Activated CD8-positive, alpha-beta T cell treated with anti-CD3 and anti-CD28 coated beads, Interleukin-2, amount 10 ng/mL, durations not matched to agents 7 days and 5 days (primary cell): ENCODE measurements at regions of chr12 and their contacts with region 1.

Region 1: DNA sequence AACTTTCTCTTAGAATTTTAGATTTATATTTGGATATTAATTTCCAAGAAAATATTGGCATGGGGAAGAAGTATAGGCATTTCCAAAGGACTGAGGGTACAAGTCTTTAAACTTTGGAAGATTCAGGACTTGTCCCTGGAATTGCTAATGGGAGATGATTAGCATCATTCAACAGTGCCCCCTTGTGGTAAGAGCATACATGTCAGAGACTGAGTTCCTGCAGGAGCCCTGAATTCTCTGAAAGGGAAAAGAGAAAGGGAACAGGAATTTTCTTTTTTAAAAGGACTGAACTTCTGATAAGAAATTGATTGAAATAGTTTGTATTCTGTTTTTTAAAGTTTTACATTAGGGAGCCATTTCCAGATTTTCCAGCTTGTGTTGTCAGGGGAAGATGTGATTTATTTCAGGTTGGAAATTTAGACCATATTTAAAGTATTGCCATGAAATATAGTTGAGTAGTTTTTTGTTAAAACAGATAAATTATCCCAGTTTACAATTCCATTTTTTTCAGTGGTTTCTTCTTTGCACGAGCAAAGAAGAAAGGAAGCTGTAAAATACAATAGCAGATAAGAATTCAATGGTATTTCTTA is 44.0 kb upstream of the REP15 start:
- DNase-seq: peak; percentile 57
- ATAC-seq: no peak
- H3K4me3 Mint-ChIP-seq: no peak overlapping the region
- H3K27ac Mint-ChIP-seq: no peak overlapping the region
- H3K4me1 Mint-ChIP-seq: peaks cover 18% of the 10 kb centered on the region
- H3K27me3 Mint-ChIP-seq: no peaks in the 10 kb centered on the region

Region 2: GRCh38 chr12:27523642-27524493 is 128.4 kb before region 1 on chr12 and contains the start of gene PPFIBP1:
- CTCF ChIA-PET with region 1: interaction called, 12 read pairs
- POLR2A ChIA-PET with region 1: no interaction called
- DNase-seq: peak; percentile 97
- ATAC-seq: peak; percentile 99
- H3K4me3 Mint-ChIP-seq: peak within 1 kb of the TSS; percentile 96
- H3K27ac Mint-ChIP-seq: peak within 1 kb of the TSS; percentile 90
- H3K4me1 Mint-ChIP-seq: peaks cover 25% of the 10 kb centered on the region
- H3K27me3 Mint-ChIP-seq: peaks cover 27% of the 10 kb centered on the region
- total RNA-seq, gene PPFIBP1: 17.5 TPM

Region 3: DNA sequence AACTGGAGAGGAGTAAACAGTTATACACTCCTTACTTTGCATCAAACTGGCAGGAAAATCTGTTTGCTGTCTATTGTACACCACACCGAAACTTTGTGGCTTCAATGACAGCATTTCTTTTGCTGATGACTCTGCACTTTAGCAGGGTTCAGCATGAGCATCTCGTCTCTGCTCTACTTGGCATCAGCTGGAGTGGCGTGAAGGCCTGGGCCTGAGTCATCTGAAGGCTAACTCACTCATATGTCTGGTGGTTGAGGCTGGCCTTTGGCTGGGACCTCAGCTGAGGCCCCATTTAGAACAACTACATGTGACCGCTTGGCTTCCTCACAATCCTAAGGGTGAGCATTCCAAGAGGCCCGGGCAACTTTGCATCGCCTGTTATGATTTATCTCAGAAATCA is 15.3 kb after region 1 on chr12:
- CTCF ChIA-PET with region 1: interaction called, 18 read pairs
- POLR2A ChIA-PET with region 1: no interaction called
- DNase-seq: no peak
- ATAC-seq: no peak
- H3K4me3 Mint-ChIP-seq: no peak overlapping the region
- H3K27ac Mint-ChIP-seq: no peak overlapping the region
- H3K4me1 Mint-ChIP-seq: no peaks in the 10 kb centered on the region
- H3K27me3 Mint-ChIP-seq: no peaks in the 10 kb centered on the region